Mammary epithelial cell (primary cell): ENCODE measurements at regions of chr12 and their contacts with region 1.

Region 1: GRCh38 chr12:27383429-27384260 is 51.0 kb downstream of the BMAL2 start:
- DNase-seq: peak; percentile 83
- H3K4me3 ChIP-seq: no peak overlapping the region
- H3K27ac ChIP-seq: peak overlapping the region; percentile 68
- H3K4me1 ChIP-seq: peaks cover 11% of the 10 kb centered on the region
- H3K27me3 ChIP-seq: no peaks in the 10 kb centered on the region
- CTCF ChIP-seq: peak; percentile 94 to 96

Region 2: DNA sequence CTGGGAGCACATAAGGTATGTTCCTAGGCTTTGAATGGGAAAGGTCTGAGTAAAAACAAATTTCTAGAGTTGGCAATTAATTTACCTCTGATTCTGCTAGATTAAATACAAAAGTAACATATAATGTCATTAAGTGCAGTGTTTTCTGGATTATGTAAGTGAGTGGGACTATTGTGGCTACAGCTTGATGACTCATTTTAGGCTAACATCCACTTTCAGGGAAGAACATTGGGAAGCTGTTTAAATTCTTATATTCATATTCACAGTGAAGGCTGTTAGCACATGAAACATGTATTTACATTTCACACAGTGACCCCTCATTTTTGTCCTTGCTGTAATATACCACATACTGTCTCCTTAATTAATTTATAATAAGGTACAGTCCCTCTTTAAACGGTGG is 64.2 kb before region 1 on chr12:
- CTCF ChIA-PET with region 1: no interaction called
- dilution Hi-C with region 1: no loop called
- in situ Hi-C with region 1: no loop called
- intact Hi-C with region 1: loop called (anchors 5 kb)
- DNase-seq: peak; percentile 51
- H3K4me3 ChIP-seq: no peak overlapping the region
- H3K27ac ChIP-seq: peak overlapping the region; percentile 37
- H3K4me1 ChIP-seq: peaks cover 11% of the 10 kb centered on the region
- H3K27me3 ChIP-seq: no peaks in the 10 kb centered on the region
- CTCF ChIP-seq: no peak

Region 3: GRCh38 chr12:27343255-27344000 is 40.2 kb before region 1 on chr12:
- CTCF ChIA-PET with region 1: no interaction called
- dilution Hi-C with region 1: no loop called
- in situ Hi-C with region 1: loop called in 1 of 2 experiments (anchors 10 kb)
- intact Hi-C with region 1: loop called (anchors 2 kb)
- DNase-seq: peak; percentile 96
- H3K4me3 ChIP-seq: no peak overlapping the region
- H3K27ac ChIP-seq: peak overlapping the region; percentile 99
- H3K4me1 ChIP-seq: peaks cover 55% of the 10 kb centered on the region
- H3K27me3 ChIP-seq: no peaks in the 10 kb centered on the region
- CTCF ChIP-seq: no peak

Region 4: GRCh38 chr12:27400856-27401354 is 17.3 kb after region 1 on chr12:
- CTCF ChIA-PET with region 1: no interaction called
- dilution Hi-C with region 1: no loop called
- in situ Hi-C with region 1: no loop called
- intact Hi-C with region 1: no loop called
- DNase-seq: no peak
- H3K4me3 ChIP-seq: no peak overlapping the region
- H3K27ac ChIP-seq: no peak overlapping the region
- H3K4me1 ChIP-seq: no peaks in the 10 kb centered on the region
- H3K27me3 ChIP-seq: no peaks in the 10 kb centered on the region
- CTCF ChIP-seq: no peak